Sigmoid colon (tissue), 7 donors: ENCODE measurements at regions of chr6 and their contacts with region 1.

Region 1: GRCh38 chr6:73580247-73581149 is 59.7 kb upstream of the EEF1A1 start:
- DNase-seq: peak; percentile 93
- H3K4me3 ChIP-seq: peak overlapping the region in 3 of 4 donors; percentile 25 to 39 (median 28)
- H3K27ac ChIP-seq: peak overlapping the region; percentile 90 to 98 (median 93)
- H3K4me1 ChIP-seq: peaks cover 0 to 35% (median 31%) of the 10 kb centered on the region in 4 donors
- H3K27me3 ChIP-seq: no peaks in the 10 kb centered on the region
- CTCF ChIP-seq: peak in 3 of 4 experiments; percentile 9 to 43 (median 30)
- EP300 ChIP-seq: peak in 3 of 4 donors; percentile 14 to 80 (median 15)
- POLR2A ChIP-seq: peak in 1 of 2 donors; percentile 8

Region 2: GRCh38 chr6:73624896-73625295 is 44.4 kb after region 1 on chr6:
- intact Hi-C with region 1: no loop called
- DNase-seq: no peak
- H3K4me3 ChIP-seq: no peak overlapping the region
- H3K27ac ChIP-seq: no peak overlapping the region
- H3K4me1 ChIP-seq: no peaks in the 10 kb centered on the region
- H3K27me3 ChIP-seq: no peaks in the 10 kb centered on the region
- CTCF ChIP-seq: no peak
- EP300 ChIP-seq: no peak
- POLR2A ChIP-seq: no peak

Region 3: GRCh38 chr6:73653571-73654424 is 73.3 kb after region 1 on chr6 and contains the start of gene SLC17A5:
- intact Hi-C with region 1: loop called (anchors 5 kb)
- DNase-seq: peak; percentile 97
- H3K4me3 ChIP-seq: peak within 1 kb of the TSS; percentile 84 to 98 (median 92)
- H3K27ac ChIP-seq: peak within 1 kb of the TSS; percentile 94 to 99 (median 96)
- H3K4me1 ChIP-seq: peaks cover 0 to 21% (median 15%) of the 10 kb centered on the region in 4 donors
- H3K27me3 ChIP-seq: no peaks in the 10 kb centered on the region
- CTCF ChIP-seq: peak in 1 of 4 experiments; percentile 9
- EP300 ChIP-seq: no peak
- POLR2A ChIP-seq: peak; percentile 34 to 52
- total RNA-seq, gene SLC17A5: 12.2 to 18.2 (median 14.8) TPM